ENCODE measurements at regions of chr6 and their contacts with region 1.

Region 1: GRCh38 chr6:154805288-154805911 is 72.2 kb downstream of the SCAF8 start:
- DNase-seq: no peak
- H3K4me3 ChIP-seq: no peak overlapping the region
- H3K4me3 Mint-ChIP-seq: no peak overlapping the region
- H3K27ac Mint-ChIP-seq: no peak overlapping the region
- H3K4me1 ChIP-seq: no peaks in the 10 kb centered on the region
- H3K4me1 Mint-ChIP-seq: peaks cover 6% of the 10 kb centered on the region
- H3K27me3 ChIP-seq: no peaks in the 10 kb centered on the region
- H3K27me3 Mint-ChIP-seq: no peaks in the 10 kb centered on the region
- CTCF ChIP-seq: peak; percentile 36 to 46

Region 2: GRCh38 chr6:154156135-154156896 is 649.1 kb before region 1 on chr6:
- CTCF ChIA-PET with region 1: no interaction called
- POLR2A ChIA-PET with region 1: no interaction called
- intact Hi-C with region 1: no loop called
- DNase-seq: peak; percentile 36 to 55
- H3K4me3 ChIP-seq: no peak overlapping the region
- H3K4me3 Mint-ChIP-seq: no peak overlapping the region
- H3K27ac Mint-ChIP-seq: no peak overlapping the region
- H3K4me1 ChIP-seq: no peaks in the 10 kb centered on the region
- H3K4me1 Mint-ChIP-seq: no peaks in the 10 kb centered on the region
- H3K27me3 ChIP-seq: no peaks in the 10 kb centered on the region
- H3K27me3 Mint-ChIP-seq: no peaks in the 10 kb centered on the region
- CTCF ChIP-seq: peak; percentile 41 to 65

Region 3: GRCh38 chr6:154733012-154733625 is 72.3 kb before region 1 on chr6 and contains the start of gene SCAF8:
- CTCF ChIA-PET with region 1: no interaction called
- POLR2A ChIA-PET with region 1: interaction called, 5 read pairs
- intact Hi-C with region 1: loop called (anchors 1 kb)
- DNase-seq: peak; percentile 67 to 92
- H3K4me3 ChIP-seq: peak within 1 kb of the TSS; percentile 92
- H3K4me3 Mint-ChIP-seq: peak within 1 kb of the TSS; percentile 84
- H3K27ac Mint-ChIP-seq: peak within 1 kb of the TSS; percentile 89
- H3K4me1 ChIP-seq: peaks cover 13% of the 10 kb centered on the region
- H3K4me1 Mint-ChIP-seq: peaks cover 12% of the 10 kb centered on the region
- H3K27me3 ChIP-seq: no peaks in the 10 kb centered on the region
- H3K27me3 Mint-ChIP-seq: no peaks in the 10 kb centered on the region
- CTCF ChIP-seq: peak; percentile 53 to 79
- total RNA-seq, gene SCAF8: 45.2 and 45.9 TPM in 2 replicates

Region 4: GRCh38 chr6:154928325-154928922 is 123.0 kb after region 1 on chr6:
- CTCF ChIA-PET with region 1: no interaction called
- POLR2A ChIA-PET with region 1: no interaction called
- intact Hi-C with region 1: no loop called
- DNase-seq: peak; percentile 47 to 71
- H3K4me3 ChIP-seq: no peak overlapping the region
- H3K4me3 Mint-ChIP-seq: no peak overlapping the region
- H3K27ac Mint-ChIP-seq: no peak overlapping the region
- H3K4me1 ChIP-seq: peaks cover 25% of the 10 kb centered on the region
- H3K4me1 Mint-ChIP-seq: peaks cover 21% of the 10 kb centered on the region
- H3K27me3 ChIP-seq: no peaks in the 10 kb centered on the region
- H3K27me3 Mint-ChIP-seq: no peaks in the 10 kb centered on the region
- CTCF ChIP-seq: peak; percentile 74 to 77

Measured in Caco-2 (cell line).